ENCODE measurements at regions of chr14 and their contacts with region 1.

Region 1: GRCh38 chr14:87691042-87691881 is 301.7 kb downstream of the GALC start:
- DNase-seq: no peak
- H3K4me3 ChIP-seq: no peak overlapping the region
- H3K4me3 Mint-ChIP-seq: no peak overlapping the region
- H3K27ac Mint-ChIP-seq: no peak overlapping the region
- H3K4me1 ChIP-seq: no peaks in the 10 kb centered on the region
- H3K4me1 Mint-ChIP-seq: peaks cover 7% of the 10 kb centered on the region
- H3K27me3 ChIP-seq: no peaks in the 10 kb centered on the region
- H3K27me3 Mint-ChIP-seq: peaks cover 4% of the 10 kb centered on the region
- CTCF ChIP-seq: no peak

Region 2: GRCh38 chr14:87468531-87468930 is 222.7 kb before region 1 on chr14:
- CTCF ChIA-PET with region 1: no interaction called
- POLR2A ChIA-PET with region 1: no interaction called
- intact Hi-C with region 1: no loop called
- DNase-seq: no peak
- H3K4me3 ChIP-seq: no peak overlapping the region
- H3K4me3 Mint-ChIP-seq: no peak overlapping the region
- H3K27ac Mint-ChIP-seq: no peak overlapping the region
- H3K4me1 ChIP-seq: no peaks in the 10 kb centered on the region
- H3K4me1 Mint-ChIP-seq: no peaks in the 10 kb centered on the region
- H3K27me3 ChIP-seq: no peaks in the 10 kb centered on the region
- H3K27me3 Mint-ChIP-seq: peaks cover 3% of the 10 kb centered on the region
- CTCF ChIP-seq: no peak

Region 3: GRCh38 chr14:87522575-87522974 is 168.7 kb before region 1 on chr14:
- CTCF ChIA-PET with region 1: no interaction called
- POLR2A ChIA-PET with region 1: no interaction called
- intact Hi-C with region 1: no loop called
- DNase-seq: peak; percentile 24 to 42
- H3K4me3 ChIP-seq: no peak overlapping the region
- H3K4me3 Mint-ChIP-seq: no peak overlapping the region
- H3K27ac Mint-ChIP-seq: no peak overlapping the region
- H3K4me1 ChIP-seq: no peaks in the 10 kb centered on the region
- H3K4me1 Mint-ChIP-seq: peaks cover 6% of the 10 kb centered on the region
- H3K27me3 ChIP-seq: no peaks in the 10 kb centered on the region
- H3K27me3 Mint-ChIP-seq: no peaks in the 10 kb centered on the region
- CTCF ChIP-seq: no peak

Region 4: DNA sequence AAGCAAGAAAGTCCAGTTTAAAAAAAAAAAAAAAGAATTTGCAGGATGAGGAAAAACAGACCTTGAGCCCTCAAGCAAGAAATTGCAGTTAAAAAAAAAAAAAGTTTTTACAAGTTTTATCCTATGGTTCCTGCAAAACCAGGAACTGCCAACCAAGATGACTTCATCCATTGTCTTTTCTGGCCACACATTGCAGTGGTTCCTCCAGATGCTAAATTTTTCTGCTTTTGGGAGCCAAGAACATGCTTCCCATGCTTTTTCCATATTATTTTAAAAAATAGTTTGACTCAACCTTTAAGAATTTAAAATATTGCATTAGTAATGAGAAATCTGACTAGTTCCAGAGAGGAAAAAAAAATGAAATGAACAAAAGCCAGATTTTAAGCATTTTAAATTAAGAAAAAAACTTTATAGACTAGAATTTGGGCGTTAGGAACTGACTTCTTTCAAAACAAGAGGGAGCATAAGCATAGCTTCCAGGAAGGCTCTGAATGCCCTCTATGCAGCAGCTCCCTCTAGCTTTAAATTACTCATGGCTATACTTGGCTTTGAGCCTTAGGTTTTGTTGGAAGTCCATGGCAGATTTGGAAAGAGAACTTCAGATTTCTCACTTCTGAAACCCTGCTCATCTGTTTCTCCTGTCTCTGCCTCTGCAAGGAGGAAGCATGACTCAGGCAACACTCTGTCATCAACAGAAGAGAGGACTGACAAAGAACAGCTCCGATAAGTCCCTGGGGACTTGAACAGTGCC is 438.2 kb after region 1 on chr14:
- CTCF ChIA-PET with region 1: no interaction called
- POLR2A ChIA-PET with region 1: no interaction called
- intact Hi-C with region 1: loop called (anchors 5 kb)
- DNase-seq: no peak
- H3K4me3 ChIP-seq: no peak overlapping the region
- H3K4me3 Mint-ChIP-seq: no peak overlapping the region
- H3K27ac Mint-ChIP-seq: no peak overlapping the region
- H3K4me1 ChIP-seq: no peaks in the 10 kb centered on the region
- H3K4me1 Mint-ChIP-seq: no peaks in the 10 kb centered on the region
- H3K27me3 ChIP-seq: no peaks in the 10 kb centered on the region
- H3K27me3 Mint-ChIP-seq: peaks cover 9% of the 10 kb centered on the region
- CTCF ChIP-seq: no peak